ENCODE measurements at regions of chr4 and their contacts with region 1.

Region 1: GRCh38 chr4:15655229-15656037 is at the start of gene FBXL5:
- DNase-seq: peak; percentile 82
- H3K4me3 ChIP-seq: peak within 1 kb of the TSS; percentile 82 to 93 (median 86)
- H3K27ac ChIP-seq: peak within 1 kb of the TSS; percentile 88
- H3K4me1 ChIP-seq: peaks cover 27% of the 10 kb centered on the region
- H3K27me3 ChIP-seq: no peaks in the 10 kb centered on the region
- CTCF ChIP-seq: no peak
- total RNA-seq, gene FBXL5: 72.1 to 109 TPM

Region 2: DNA sequence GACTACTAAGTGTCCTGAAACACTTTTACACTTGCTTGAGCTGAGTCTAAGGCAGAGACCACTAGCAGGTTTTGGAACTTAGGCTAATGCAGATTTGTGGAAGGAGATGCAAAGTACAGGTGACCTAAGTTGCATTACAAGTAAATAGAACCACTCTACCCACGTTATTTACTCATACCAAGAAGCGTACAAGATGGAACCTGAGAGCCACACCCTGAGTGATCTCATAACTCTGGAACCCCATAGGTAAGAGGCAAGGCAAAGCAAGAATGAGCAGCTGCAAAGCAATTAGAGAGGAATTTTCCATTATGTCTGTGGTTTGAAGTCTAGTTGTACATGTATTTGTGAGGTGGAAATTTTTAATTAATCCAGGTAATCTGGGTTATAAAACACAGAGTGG is 130.4 kb before region 1 on chr4:
- CTCF ChIA-PET with region 1: no interaction called
- dilution Hi-C with region 1: no loop called
- in situ Hi-C with region 1: no loop called
- intact Hi-C with region 1: loop called (anchors 1 kb)
- DNase-seq: peak; percentile 89
- H3K4me3 ChIP-seq: no peak overlapping the region
- H3K27ac ChIP-seq: peak overlapping the region; percentile 89
- H3K4me1 ChIP-seq: peaks cover 13% of the 10 kb centered on the region
- H3K27me3 ChIP-seq: no peaks in the 10 kb centered on the region
- CTCF ChIP-seq: no peak

Region 3: GRCh38 chr4:15681207-15682015 is 26.0 kb after region 1 on chr4 and contains the start of gene FAM200B:
- CTCF ChIA-PET with region 1: interaction called, 4 read pairs
- dilution Hi-C with region 1: no loop called
- in situ Hi-C with region 1: no loop called
- intact Hi-C with region 1: loop called (anchors 1 kb)
- DNase-seq: peak; percentile 100
- H3K4me3 ChIP-seq: peak within 1 kb of the TSS; percentile 75 to 98 (median 95)
- H3K27ac ChIP-seq: peak within 1 kb of the TSS; percentile 97
- H3K4me1 ChIP-seq: peaks cover 30% of the 10 kb centered on the region
- H3K27me3 ChIP-seq: no peaks in the 10 kb centered on the region
- CTCF ChIP-seq: peak in 1 of 2 donors; percentile 26
- total RNA-seq, gene FAM200B: 19.3 to 36.1 TPM

Measured in mammary epithelial cell (primary cell).